Thyroid gland (tissue), 4 donors: ENCODE measurements at regions of chr20 and their contacts with region 1.

Region 1: GRCh38 chr20:53578492-53579222 is 15.0 kb downstream of the ZNF217 start:
- DNase-seq: peak; percentile 44 to 55
- H3K4me3 ChIP-seq: no peak overlapping the region
- H3K27ac ChIP-seq: peak overlapping the region; percentile 69 to 89 (median 72)
- H3K4me1 ChIP-seq: peaks cover 19 to 47% of the 10 kb centered on the region in 2 donors
- H3K27me3 ChIP-seq: no peaks in the 10 kb centered on the region
- CTCF ChIP-seq: peak; percentile 79 to 99 (median 94)
- POLR2A ChIP-seq: no peak

Region 2: DNA sequence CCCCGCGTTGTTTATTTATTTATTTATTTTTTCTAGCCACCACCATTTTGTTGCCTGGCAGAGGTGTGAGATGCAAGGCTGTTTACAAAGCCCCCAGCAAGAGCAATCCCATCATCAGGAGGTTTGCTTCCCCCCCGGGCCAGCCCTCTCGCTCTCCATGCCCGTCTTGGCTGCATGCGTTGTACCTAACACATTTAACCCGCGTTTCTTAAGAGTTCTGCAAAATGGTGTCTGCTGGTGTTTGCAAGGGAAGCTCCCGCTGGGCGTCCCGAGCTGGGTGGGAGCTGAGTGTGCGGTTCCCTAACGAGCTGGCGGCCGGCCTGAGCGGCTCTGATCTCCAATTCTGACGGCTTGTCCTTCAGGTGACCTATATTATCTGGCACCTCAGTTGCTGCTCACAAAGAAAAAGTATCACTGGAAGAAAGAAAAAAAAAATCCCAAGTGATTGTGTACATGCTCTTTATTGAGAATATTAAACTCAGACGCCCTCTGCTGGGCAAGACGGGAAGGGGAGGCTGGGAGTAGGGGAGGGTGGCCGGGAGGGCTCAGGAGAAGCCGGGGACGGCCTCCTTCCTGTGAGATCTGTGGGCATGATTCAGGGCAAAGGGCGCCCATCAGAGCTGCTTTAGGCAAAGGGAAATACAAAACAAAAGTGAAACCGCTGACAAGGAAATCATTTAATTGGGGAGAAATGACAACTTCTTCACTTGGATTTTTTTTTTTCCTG is 337.0 kb after region 1 on chr20:
- intact Hi-C with region 1: loop called (anchors 5 kb)
- DNase-seq: peak; percentile 96 to 98
- H3K4me3 ChIP-seq: peak overlapping the region; percentile 3 to 38 (median 33)
- H3K27ac ChIP-seq: peak overlapping the region; percentile 87 to 96 (median 91)
- H3K4me1 ChIP-seq: peaks cover 29 to 36% of the 10 kb centered on the region in 2 donors
- H3K27me3 ChIP-seq: no peaks in the 10 kb centered on the region
- CTCF ChIP-seq: peak; percentile 78 to 98 (median 88)
- POLR2A ChIP-seq: no peak

Region 3: DNA sequence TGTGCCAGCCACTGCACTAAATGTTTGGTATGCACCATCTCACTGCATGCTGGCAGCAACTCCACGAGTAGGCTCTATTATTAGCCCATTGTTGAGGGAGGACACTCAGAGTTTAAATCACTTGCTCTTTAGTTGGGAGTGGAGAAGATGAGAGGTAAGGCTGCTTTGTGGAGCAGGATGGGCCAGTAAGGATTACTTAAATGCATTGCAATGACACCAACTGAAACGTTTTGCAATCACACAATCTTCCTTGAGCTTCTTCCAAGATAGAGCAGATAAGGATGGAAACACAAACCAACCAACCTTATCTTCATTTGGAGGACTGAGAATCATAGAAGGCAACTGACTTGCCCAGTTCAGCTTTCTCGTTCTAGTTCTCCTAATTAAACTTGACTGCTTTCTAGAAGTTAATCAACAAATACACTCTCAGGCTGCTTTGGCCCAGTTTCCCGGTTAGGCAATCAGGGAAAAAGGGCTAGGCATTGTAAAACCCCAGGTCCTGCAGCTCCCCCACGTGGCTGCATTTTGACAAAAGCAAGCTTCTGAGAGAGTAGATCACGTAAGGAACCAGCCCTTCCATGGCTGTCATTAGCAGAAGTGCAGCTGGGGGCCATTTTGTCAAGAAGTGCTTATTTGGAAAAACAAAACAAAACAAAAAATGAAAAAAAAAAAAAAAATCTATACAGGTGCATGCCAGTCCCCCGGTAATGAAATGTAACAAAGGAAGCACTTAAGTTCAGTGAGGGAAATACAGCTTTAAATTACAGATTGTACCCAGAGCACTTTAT is 361.1 kb after region 1 on chr20:
- intact Hi-C with region 1: loop called (anchors 5 kb)
- DNase-seq: peak; percentile 95 to 97
- H3K4me3 ChIP-seq: no peak overlapping the region
- H3K27ac ChIP-seq: peak overlapping the region; percentile 26 to 76 (median 75)
- H3K4me1 ChIP-seq: peaks cover 41 to 59% of the 10 kb centered on the region in 2 donors
- H3K27me3 ChIP-seq: no peaks in the 10 kb centered on the region
- CTCF ChIP-seq: peak; percentile 36 to 91 (median 80)
- POLR2A ChIP-seq: peak in 1 of 2 donors; percentile 27